Mammary epithelial cell (primary cell): ENCODE measurements at regions of chr2 and their contacts with region 1.

Region 1: GRCh38 chr2:219206442-219207253 is at the start of gene ZFAND2B:
- DNase-seq: peak; percentile 93
- H3K4me3 ChIP-seq: peak within 1 kb of the TSS; percentile 62 to 88 (median 74)
- H3K27ac ChIP-seq: peak within 1 kb of the TSS; percentile 36
- H3K4me1 ChIP-seq: peaks cover 17% of the 10 kb centered on the region
- H3K27me3 ChIP-seq: no peaks in the 10 kb centered on the region
- CTCF ChIP-seq: no peak
- total RNA-seq, gene ZFAND2B: 23.7 to 33.8 TPM

Region 2: GRCh38 chr2:219049282-219049681 is 157.4 kb before region 1 on chr2:
- CTCF ChIA-PET with region 1: no interaction called
- dilution Hi-C with region 1: no loop called
- in situ Hi-C with region 1: no loop called
- intact Hi-C with region 1: no loop called
- DNase-seq: peak; percentile 53
- H3K4me3 ChIP-seq: no peak overlapping the region
- H3K27ac ChIP-seq: no peak overlapping the region
- H3K4me1 ChIP-seq: peaks cover 4% of the 10 kb centered on the region
- H3K27me3 ChIP-seq: no peaks in the 10 kb centered on the region
- CTCF ChIP-seq: no peak

Region 3: DNA sequence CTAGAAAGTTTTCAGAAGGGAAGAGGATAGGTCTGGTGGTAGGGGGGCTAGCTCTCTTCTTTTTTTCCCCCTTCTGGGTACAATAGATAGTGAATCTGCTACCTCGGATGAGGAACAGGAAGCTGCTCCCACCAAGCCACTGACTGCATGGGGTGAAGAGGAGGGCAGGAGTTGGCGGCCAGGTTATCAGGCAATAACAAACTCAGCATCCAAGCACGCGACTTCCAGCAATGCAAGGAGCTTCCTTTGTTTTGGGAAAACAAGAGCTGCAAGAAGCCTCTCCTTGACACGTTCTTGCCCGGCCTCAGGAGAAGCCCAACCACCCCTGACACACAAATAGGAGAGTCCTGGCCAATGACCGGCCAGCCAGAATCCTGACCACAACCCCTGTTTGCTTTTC is 78.3 kb before region 1 on chr2:
- CTCF ChIA-PET with region 1: no interaction called
- dilution Hi-C with region 1: no loop called
- in situ Hi-C with region 1: no loop called
- intact Hi-C with region 1: no loop called
- DNase-seq: no peak
- H3K4me3 ChIP-seq: no peak overlapping the region
- H3K27ac ChIP-seq: no peak overlapping the region
- H3K4me1 ChIP-seq: peaks cover 24% of the 10 kb centered on the region
- H3K27me3 ChIP-seq: no peaks in the 10 kb centered on the region
- CTCF ChIP-seq: no peak

Region 4: GRCh38 chr2:219160186-219161017 is 46.2 kb before region 1 on chr2 and contains the start of gene NHEJ1:
- CTCF ChIA-PET with region 1: no interaction called
- dilution Hi-C with region 1: no loop called
- in situ Hi-C with region 1: loop called in 1 of 2 experiments (anchors 5 kb)
- intact Hi-C with region 1: loop called (anchors 1 kb)
- DNase-seq: peak; percentile 88
- H3K4me3 ChIP-seq: peak within 1 kb of the TSS; percentile 74 to 91 (median 79)
- H3K27ac ChIP-seq: peak within 1 kb of the TSS; percentile 19
- H3K4me1 ChIP-seq: peaks cover 15% of the 10 kb centered on the region
- H3K27me3 ChIP-seq: no peaks in the 10 kb centered on the region
- CTCF ChIP-seq: peak; percentile 84 to 96
- total RNA-seq, gene NHEJ1: 10.4 to 13.3 TPM

Region 5: GRCh38 chr2:219171231-219171651 is 35.4 kb before region 1 on chr2:
- CTCF ChIA-PET with region 1: interaction called, 4 read pairs
- dilution Hi-C with region 1: no loop called
- in situ Hi-C with region 1: loop called in 1 of 2 experiments (anchors 5 kb)
- intact Hi-C with region 1: no loop called
- DNase-seq: peak; percentile 23
- H3K4me3 ChIP-seq: no peak overlapping the region
- H3K27ac ChIP-seq: no peak overlapping the region
- H3K4me1 ChIP-seq: peaks cover 8% of the 10 kb centered on the region
- H3K27me3 ChIP-seq: no peaks in the 10 kb centered on the region
- CTCF ChIP-seq: peak; percentile 61 to 67

Region 6: DNA sequence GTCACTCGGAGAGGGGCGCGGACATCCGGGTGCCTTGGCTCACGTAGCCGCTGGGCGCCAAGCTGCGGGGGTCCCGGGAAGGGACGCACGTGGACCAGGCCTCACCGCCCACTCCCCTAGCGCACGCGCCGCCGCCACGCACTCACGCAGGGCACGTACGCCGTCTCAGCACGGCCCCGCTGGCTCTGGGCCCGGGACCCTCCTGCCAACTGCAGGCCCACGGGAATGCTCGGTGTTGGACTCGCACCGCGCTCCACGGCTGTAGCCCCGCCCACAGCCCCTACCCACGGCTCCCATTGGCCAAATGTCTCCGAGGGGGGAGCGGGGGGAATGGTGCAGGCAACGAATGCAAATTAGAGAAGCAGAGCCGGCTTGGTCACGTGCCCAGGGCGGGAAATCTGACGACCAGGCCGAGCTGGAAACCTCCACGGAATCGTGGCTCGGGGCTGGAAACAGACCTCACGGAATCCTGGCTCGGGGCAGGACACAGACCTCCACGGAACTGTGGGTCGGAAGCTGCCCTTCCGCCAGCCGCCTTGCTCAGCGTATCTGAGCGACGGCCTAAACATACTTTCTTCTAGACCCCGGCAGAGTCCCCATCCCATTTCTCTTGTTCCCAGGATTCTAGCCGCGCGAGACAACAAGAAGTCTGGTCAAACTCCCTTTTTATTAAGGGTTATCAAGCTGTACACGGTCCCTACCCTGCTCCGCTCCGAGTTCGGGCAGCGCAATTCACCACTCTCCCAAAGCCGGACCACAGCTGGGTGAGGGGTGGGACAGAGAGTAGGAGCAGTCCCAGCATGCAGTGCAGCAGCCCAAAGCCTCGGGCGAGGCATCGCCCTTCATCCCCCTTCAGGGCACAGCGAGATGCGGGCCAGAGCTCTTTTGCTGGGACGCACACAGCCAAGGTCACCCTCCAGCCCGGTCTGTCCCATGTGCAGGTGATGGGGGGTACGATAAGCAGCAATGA is 12.4 kb after region 1 on chr2 and contains the start of gene ABCB6:
- CTCF ChIA-PET with region 1: no interaction called
- dilution Hi-C with region 1: no loop called
- in situ Hi-C with region 1: no loop called
- intact Hi-C with region 1: loop called (anchors 1 kb)
- DNase-seq: peak; percentile 57
- H3K4me3 ChIP-seq: peak within 1 kb of the TSS; percentile 12 to 54 (median 48)
- H3K27ac ChIP-seq: peak within 1 kb of the TSS; percentile 18
- H3K4me1 ChIP-seq: peaks cover 21% of the 10 kb centered on the region
- H3K27me3 ChIP-seq: no peaks in the 10 kb centered on the region
- CTCF ChIP-seq: no peak
- total RNA-seq, gene ABCB6: 9.6 to 15.7 TPM

Region 7: DNA sequence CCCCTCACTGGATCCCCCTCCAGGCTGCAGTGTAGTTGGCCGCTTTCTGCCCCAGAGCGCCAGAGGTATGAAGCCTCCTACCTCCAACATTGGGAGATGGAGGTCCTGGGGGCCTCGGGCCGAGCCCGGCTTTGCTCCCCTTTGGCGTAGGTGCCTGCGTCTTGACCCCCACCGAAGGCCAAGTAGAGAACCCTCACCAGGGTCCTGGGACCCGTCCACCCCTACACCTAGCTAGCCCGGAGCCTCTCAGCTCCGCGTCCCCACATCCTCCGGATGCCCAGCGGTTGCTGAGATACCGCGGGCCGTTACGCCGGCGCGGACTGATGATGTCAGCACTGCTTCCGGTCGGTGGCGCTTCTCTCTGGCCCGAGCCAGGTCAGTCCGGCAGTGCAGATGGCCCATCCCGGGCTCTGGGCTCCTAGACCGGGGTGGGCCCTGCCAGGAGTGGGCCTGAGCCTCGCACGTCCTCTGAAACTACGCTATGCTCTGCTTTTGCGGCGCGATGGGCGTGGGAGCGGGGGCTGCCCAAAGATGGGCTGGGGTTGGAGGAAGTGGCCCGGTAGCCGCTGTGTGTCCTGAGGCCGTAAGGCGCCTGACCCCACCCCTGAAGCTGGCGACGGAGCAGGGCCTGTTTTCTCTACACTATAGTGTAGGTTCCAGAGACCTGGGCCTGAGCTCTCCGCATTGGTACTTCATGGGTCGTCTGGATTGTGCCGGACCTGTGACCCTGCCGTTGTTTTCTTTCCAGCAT is 38.7 kb after region 1 on chr2 and contains the starts of genes GLB1L and STK16:
- CTCF ChIA-PET with region 1: no interaction called
- dilution Hi-C with region 1: no loop called
- in situ Hi-C with region 1: no loop called
- intact Hi-C with region 1: loop called (anchors 1 kb)
- DNase-seq: peak; percentile 85
- H3K4me3 ChIP-seq: peak within 1 kb of the TSS; percentile 67 to 98 (median 82)
- H3K27ac ChIP-seq: peak within 1 kb of the TSS; percentile 88
- H3K4me1 ChIP-seq: peaks cover 46% of the 10 kb centered on the region
- H3K27me3 ChIP-seq: no peaks in the 10 kb centered on the region
- CTCF ChIP-seq: no peak
- total RNA-seq, gene GLB1L: 5.5 to 21.8 TPM
- total RNA-seq, gene STK16: 26.9 to 29.8 TPM

Region 8: GRCh38 chr2:219261024-219261855 is 54.6 kb after region 1 on chr2:
- CTCF ChIA-PET with region 1: no interaction called
- dilution Hi-C with region 1: loop called (anchors 5 kb)
- in situ Hi-C with region 1: no loop called
- intact Hi-C with region 1: no loop called
- DNase-seq: no peak
- H3K4me3 ChIP-seq: no peak overlapping the region
- H3K27ac ChIP-seq: no peak overlapping the region
- H3K4me1 ChIP-seq: no peaks in the 10 kb centered on the region
- H3K27me3 ChIP-seq: no peaks in the 10 kb centered on the region
- CTCF ChIP-seq: no peak